Activated naive CD4-positive, alpha-beta T cell treated with anti-CD3 and anti-CD28 coated beads for 36 hours (primary cell): ENCODE measurements at regions of chr7 and their contacts with region 1.

Region 1: GRCh38 chr7:133442818-133443217 is 189.9 kb downstream of the EXOC4 start:
- DNase-seq: no peak
- H3K4me3 Mint-ChIP-seq: no peak overlapping the region
- H3K27ac Mint-ChIP-seq: no peak overlapping the region
- H3K4me1 Mint-ChIP-seq: no peaks in the 10 kb centered on the region
- H3K27me3 Mint-ChIP-seq: no peaks in the 10 kb centered on the region

Region 2: GRCh38 chr7:133504825-133505224 is 62.0 kb after region 1 on chr7:
- CTCF ChIA-PET with region 1: no interaction called
- intact Hi-C with region 1: loop called (anchors 10 kb)
- DNase-seq: no peak
- H3K4me3 Mint-ChIP-seq: no peak overlapping the region
- H3K27ac Mint-ChIP-seq: no peak overlapping the region
- H3K4me1 Mint-ChIP-seq: no peaks in the 10 kb centered on the region
- H3K27me3 Mint-ChIP-seq: no peaks in the 10 kb centered on the region